SK-N-SH (cell line): ENCODE measurements at regions of chr19 and their contacts with region 1.

Region 1: GRCh38 chr19:1507763-1508509 is 4.9 kb downstream of the ADAMTSL5 start:
- DNase-seq: peak; percentile 100
- H3K4me3 ChIP-seq: peak overlapping the region; percentile 40 to 66
- H3K27ac ChIP-seq: peak overlapping the region; percentile 72 to 83
- H3K4me1 ChIP-seq: peaks cover 5 to 15% of the 10 kb centered on the region in 2 experiments; a peak in 2 of 4 replicates
- H3K27me3 ChIP-seq: 0 out of 2 replicates have a peak, but pooled peaks cover 3% of the 10 kb centered on the region
- CTCF ChIP-seq: no peak
- EP300 ChIP-seq: no peak
- RAD21 ChIP-seq: no peak

Region 2: DNA sequence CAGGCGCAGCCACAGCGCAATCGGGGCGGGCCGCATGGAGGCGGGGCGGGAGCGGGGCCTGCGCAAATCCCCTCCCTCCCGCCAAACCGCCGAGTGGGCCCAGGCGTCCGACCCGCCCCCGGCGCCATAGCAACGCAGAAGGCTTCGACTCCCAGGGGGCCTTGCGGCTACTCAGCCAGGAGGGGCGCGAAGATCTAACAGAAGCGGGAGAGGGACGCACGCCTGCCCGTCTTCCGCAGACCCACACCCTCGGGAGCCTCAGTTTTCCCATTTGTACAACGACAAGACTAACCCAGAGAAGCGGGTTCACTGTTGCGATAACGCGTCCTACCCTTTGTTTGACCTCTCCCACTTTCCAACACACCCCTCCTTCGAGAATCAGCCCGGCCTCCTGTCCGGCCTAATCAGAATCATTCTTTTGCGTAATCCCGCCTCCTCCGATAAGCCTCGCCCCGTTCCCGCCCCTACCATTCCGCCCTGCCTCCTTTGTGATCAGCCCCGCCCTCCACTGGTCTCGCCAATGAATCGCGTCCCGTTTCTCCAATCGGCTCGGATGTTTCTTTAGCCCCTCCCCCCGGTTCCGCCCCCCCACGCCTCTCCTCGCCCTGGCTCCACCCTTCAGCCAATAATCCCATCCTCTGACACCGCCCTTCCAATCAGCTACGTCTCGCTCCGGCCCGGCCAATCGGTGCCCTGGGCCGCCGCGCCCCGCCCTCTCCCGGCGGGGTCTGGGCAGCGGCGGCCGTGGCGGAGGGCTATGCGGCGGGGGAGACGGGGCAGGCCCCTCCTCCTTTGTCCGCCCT is 17.4 kb before region 1 on chr19 and contains the start of gene PCSK4:
- CTCF ChIA-PET with region 1: interaction called, 23 read pairs
- POLR2A ChIA-PET with region 1: no interaction called
- DNase-seq: peak; percentile 97
- H3K4me3 ChIP-seq: peak within 1 kb of the TSS; percentile 66 to 69
- H3K27ac ChIP-seq: peak within 1 kb of the TSS; percentile 61 to 91; a peak in 3 of 4 replicates
- H3K4me1 ChIP-seq: peaks cover 5 to 18% of the 10 kb centered on the region in 2 experiments; a peak in 2 of 4 replicates
- H3K27me3 ChIP-seq: no peaks in the 10 kb centered on the region
- CTCF ChIP-seq: no peak
- EP300 ChIP-seq: no peak
- RAD21 ChIP-seq: no peak
- polyA plus RNA-seq, gene PCSK4: 5.8 and 6.6 TPM in 2 replicates